ENCODE measurements at regions of chr21 and their contacts with region 1.

Region 1: DNA sequence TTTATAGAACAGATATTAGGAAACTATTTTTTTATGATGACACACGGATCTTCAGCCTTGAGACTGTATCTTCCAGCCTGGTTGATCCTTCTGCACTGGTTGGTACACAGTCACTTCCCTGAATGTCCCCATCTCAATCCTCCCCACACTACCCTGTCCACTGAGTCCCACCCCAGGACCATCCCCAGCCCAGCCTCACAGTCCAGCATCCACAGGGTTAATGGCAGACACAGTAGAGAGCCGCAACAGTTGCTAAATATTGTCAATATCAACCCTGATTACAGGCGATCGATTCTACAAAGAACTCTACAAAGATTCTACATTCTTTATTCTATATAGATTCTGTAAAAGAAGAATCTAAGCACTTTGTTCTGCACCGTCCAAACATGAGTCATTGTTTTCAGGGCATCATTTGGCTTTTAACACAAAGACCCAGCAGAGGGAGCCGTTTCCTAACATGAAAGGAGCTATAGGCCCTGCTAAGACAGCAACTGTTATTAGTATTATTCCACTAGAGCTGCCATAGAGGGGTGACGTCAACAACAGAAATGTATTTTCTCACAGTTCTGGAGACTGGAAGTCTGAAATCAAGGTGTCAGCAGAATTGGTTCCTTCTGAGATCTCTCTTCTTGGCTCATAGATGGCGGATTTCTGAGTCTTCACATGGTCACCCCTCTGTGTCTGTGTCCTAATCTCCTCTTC is 30.1 kb upstream of the IFNAR2 start:
- DNase-seq: peak; percentile 68
- H3K4me3 ChIP-seq: no peak overlapping the region; a peak in 1 of 4 replicates
- H3K27ac ChIP-seq: no peak overlapping the region
- H3K4me1 ChIP-seq: peaks cover 2 to 5% of the 10 kb centered on the region in 2 experiments; a peak in 3 of 4 replicates
- H3K27me3 ChIP-seq: peaks cover 10% of the 10 kb centered on the region; the same call in 1 of the 2 replicates
- CTCF ChIP-seq: peak; percentile 91
- EP300 ChIP-seq: no peak
- RAD21 ChIP-seq: peak; percentile 97

Region 2: DNA sequence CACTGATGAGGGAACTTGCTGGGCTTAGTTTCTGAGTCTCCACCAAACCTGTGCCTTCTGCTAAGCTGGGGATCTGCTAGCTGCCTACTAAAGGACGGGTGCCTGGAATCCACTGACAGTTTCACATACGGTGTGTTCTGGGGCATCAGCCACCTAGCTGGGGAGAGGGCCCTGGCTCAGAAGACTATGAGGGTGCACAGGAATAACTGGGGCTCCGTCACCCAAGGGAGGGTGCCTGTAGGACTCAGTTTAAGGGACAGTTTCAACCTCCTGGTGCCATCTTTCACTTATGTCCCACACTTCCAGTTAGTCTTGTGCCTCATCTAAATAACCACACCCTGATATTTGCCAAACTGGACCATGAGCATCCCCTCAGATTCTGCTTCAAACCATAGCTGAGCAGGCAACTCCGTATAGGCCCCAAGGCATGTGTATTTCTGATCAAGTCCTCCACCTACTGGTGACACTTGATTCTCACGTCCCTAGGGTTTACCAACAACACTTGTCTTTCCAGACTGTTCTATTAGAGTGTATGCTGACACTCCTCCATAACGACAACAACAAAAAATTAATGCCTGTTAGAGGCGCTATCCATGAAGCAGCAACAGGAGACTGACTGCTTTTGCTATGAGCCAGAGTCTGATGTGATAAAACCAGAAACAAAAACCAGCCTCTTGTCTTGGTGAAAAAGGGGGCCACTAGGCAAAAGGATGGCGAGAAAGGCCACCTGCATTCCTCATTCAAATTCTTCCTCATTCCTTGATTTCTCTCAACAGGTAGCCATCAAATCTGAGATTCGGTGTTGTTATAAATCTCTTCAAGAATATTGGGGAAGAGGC is 373.1 kb before region 1 on chr21:
- CTCF ChIA-PET with region 1: interaction called, 23 read pairs
- POLR2A ChIA-PET with region 1: no interaction called
- DNase-seq: peak; percentile 49
- H3K4me3 ChIP-seq: no peak overlapping the region
- H3K27ac ChIP-seq: no peak overlapping the region
- H3K4me1 ChIP-seq: no peaks in the 10 kb centered on the region
- H3K27me3 ChIP-seq: peaks cover 1% of the 10 kb centered on the region; the same call in 1 of the 2 replicates
- CTCF ChIP-seq: peak; percentile 63
- EP300 ChIP-seq: no peak
- RAD21 ChIP-seq: peak; percentile 75

Region 3: DNA sequence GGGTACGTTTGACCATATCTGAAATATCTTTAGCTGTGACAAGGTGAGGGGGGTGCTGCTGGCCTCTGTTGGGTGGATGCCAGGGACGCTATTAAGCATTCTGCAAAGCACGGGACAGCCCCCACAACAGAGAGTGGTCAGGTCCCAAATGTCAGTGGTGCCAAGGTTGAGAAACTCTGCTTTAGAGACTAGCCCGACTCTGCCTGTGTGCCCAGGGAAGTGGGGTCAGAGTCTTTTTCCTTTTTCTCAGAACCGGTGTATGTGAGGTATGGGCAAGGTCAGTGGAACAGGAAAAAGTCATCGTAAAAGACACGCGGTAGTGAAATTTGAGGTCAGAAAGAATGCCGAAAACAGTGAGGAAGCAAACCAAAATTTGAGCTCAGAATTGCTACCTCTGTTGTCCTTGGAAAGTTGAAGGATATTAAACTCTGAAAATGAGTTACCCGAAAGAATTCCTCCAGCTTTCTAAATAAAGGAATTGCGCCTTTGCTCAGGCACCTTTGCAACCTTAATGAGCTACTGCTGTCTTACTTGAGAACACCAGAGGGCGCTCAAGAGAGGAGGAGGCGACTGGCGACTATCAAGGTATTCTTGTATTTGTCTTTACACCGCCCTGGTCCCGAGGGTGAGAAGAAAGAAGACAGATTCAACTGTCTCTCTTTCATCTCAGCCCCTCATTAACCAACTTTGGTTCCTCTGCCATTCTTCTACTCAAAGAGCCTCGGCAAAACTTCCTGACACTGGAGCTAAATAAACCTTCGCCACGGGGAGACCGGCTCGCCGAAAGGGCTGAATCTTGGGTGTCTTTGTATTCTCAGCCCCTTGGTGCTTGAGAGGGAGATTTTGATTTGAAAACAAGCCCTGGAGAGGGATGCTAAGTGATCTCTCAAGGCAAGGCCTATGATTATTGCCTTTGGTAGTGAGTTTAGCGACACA is 259.3 kb before region 1 on chr21:
- CTCF ChIA-PET with region 1: interaction called, 51 read pairs
- POLR2A ChIA-PET with region 1: no interaction called
- DNase-seq: peak; percentile 28
- H3K4me3 ChIP-seq: no peak overlapping the region
- H3K27ac ChIP-seq: no peak overlapping the region
- H3K4me1 ChIP-seq: no peaks in the 10 kb centered on the region
- H3K27me3 ChIP-seq: peaks cover 54% of the 10 kb centered on the region
- CTCF ChIP-seq: peak; percentile 78
- EP300 ChIP-seq: no peak
- RAD21 ChIP-seq: peak; percentile 57

Region 4: GRCh38 chr21:33171616-33172169 is 28.0 kb before region 1 on chr21:
- CTCF ChIA-PET with region 1: interaction called, 10 read pairs
- POLR2A ChIA-PET with region 1: no interaction called
- DNase-seq: no peak
- H3K4me3 ChIP-seq: no peak overlapping the region
- H3K27ac ChIP-seq: no peak overlapping the region
- H3K4me1 ChIP-seq: no peaks in the 10 kb centered on the region
- H3K27me3 ChIP-seq: peaks cover 58% of the 10 kb centered on the region
- CTCF ChIP-seq: no peak
- EP300 ChIP-seq: no peak
- RAD21 ChIP-seq: no peak

Region 5: DNA sequence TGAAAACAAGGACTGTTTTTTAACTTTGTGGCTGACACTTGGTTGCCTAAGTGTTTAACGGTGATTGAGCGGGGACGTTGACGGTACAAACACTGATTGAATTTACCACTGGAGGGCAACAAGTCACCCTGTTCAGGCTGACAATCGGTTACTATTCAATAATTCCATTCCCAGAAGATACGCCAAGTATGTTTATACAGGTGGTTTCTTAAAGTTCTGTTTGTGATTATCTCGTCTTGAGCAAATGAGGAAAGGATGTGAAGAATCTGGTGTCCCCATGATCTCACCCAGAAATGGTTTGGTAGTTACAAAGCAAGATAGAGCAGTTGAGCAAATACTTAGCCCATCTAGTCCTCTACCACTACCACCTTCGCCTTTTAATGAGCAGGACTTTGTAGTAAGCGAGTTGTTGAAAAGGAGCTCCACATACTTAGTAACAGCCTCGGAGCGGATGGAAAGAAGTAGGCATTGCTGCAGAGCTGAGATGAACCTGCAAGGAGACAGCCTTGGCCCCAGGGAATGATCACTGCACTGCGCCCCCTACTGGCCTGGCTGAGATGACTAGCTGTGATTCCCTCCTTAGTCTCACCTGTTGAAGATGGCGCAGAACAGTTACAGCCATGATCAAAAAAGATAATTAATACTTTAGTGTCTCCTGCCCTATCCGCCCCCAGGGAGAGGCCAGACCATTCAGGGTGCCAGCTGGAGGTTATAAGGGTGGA is 161.4 kb after region 1 on chr21:
- CTCF ChIA-PET with region 1: interaction called, 31 read pairs
- POLR2A ChIA-PET with region 1: interaction called, 3 read pairs
- DNase-seq: peak; percentile 71
- H3K4me3 ChIP-seq: peak overlapping the region; percentile 21 to 29; a peak in 2 of 4 replicates
- H3K27ac ChIP-seq: peak overlapping the region; percentile 56 to 87; a peak in 3 of 4 replicates
- H3K4me1 ChIP-seq: peaks cover 14% of the 10 kb centered on the region in 2 experiments; a peak in 3 of 4 replicates
- H3K27me3 ChIP-seq: no peaks in the 10 kb centered on the region
- CTCF ChIP-seq: peak; percentile 92
- EP300 ChIP-seq: peak in 1 of 2 experiments; percentile 22; a peak in 1 of 4 replicates
- RAD21 ChIP-seq: peak; percentile 63

Region 6: GRCh38 chr21:33374450-33375096 is 174.9 kb after region 1 on chr21:
- CTCF ChIA-PET with region 1: interaction called, 16 read pairs
- POLR2A ChIA-PET with region 1: no interaction called
- DNase-seq: peak; percentile 45
- H3K4me3 ChIP-seq: no peak overlapping the region
- H3K27ac ChIP-seq: peak overlapping the region in 1 of 2 experiments; percentile 44; a peak in 1 of 4 replicates
- H3K4me1 ChIP-seq: peaks cover 0 to 13% of the 10 kb centered on the region in 2 experiments; a peak in 1 of 4 replicates
- H3K27me3 ChIP-seq: no peaks in the 10 kb centered on the region
- CTCF ChIP-seq: peak; percentile 64
- EP300 ChIP-seq: no peak
- RAD21 ChIP-seq: peak; percentile 73

Region 7: GRCh38 chr21:33455686-33456446 is 256.2 kb after region 1 on chr21:
- CTCF ChIA-PET with region 1: interaction called, 10 read pairs
- POLR2A ChIA-PET with region 1: no interaction called
- DNase-seq: no peak
- H3K4me3 ChIP-seq: no peak overlapping the region
- H3K27ac ChIP-seq: no peak overlapping the region
- H3K4me1 ChIP-seq: peaks cover 0 to 11% of the 10 kb centered on the region in 2 experiments; a peak in 1 of 4 replicates
- H3K27me3 ChIP-seq: no peaks in the 10 kb centered on the region
- CTCF ChIP-seq: no peak
- EP300 ChIP-seq: no peak
- RAD21 ChIP-seq: no peak